ENCODE measurements at regions of chr3 and their contacts with region 1.

Region 1: GRCh38 chr3:14113965-14114635 is 10.6 kb downstream of the CHCHD4 start:
- DNase-seq: no peak
- H3K4me3 ChIP-seq: no peak overlapping the region
- H3K27ac ChIP-seq: no peak overlapping the region
- H3K4me1 ChIP-seq: peaks cover 0 to 3% (median 0%) of the 10 kb centered on the region in 4 donors
- H3K27me3 ChIP-seq: no peaks in the 10 kb centered on the region
- CTCF ChIP-seq: peak in 3 of 5 experiments; percentile 14 to 22 (median 22)
- EP300 ChIP-seq: no peak
- POLR2A ChIP-seq: no peak

Region 2: DNA sequence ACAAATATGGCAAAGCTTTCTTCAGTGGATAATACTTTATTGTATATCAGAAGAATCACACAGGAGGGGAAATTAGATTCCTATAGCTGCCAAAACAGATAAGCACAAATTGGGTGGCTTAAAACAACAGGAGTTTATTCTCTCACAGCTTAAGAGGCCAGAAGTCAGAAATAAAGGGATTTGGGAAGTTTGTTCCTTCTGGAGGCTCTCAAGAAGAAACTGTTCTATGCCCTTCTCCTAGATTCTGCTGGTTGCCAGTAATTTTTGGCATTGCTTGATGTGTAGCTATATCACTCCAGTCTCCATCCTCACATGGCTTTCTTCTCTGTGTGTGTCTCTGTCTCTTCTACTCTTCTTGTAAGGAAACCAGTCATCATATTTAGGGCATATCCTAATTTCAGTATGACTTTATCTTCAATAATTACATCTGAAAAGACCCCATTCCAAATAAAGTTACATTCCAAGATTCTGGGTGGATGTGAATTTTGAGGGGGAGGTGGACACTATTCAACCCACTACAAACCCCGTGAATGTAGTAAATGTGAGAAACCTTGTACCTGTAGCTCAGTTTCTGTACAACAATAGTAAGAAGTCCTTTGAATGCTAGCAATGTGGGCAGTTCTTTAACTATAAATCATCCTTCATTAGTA is 212.0 kb before region 1 on chr3:
- in situ Hi-C with region 1: loop called in 1 of 4 experiments (anchors 10 kb)
- intact Hi-C with region 1: no loop called
- DNase-seq: no peak
- H3K4me3 ChIP-seq: no peak overlapping the region
- H3K27ac ChIP-seq: no peak overlapping the region
- H3K4me1 ChIP-seq: no peaks in the 10 kb centered on the region
- H3K27me3 ChIP-seq: no peaks in the 10 kb centered on the region
- CTCF ChIP-seq: no peak
- EP300 ChIP-seq: no peak
- POLR2A ChIP-seq: no peak

Measured in transverse colon (tissue), 4 donors.